ENCODE measurements at regions of chr1 and their contacts with region 1.

Region 1: GRCh38 chr1:77978969-77979876 is at the start of gene FUBP1:
- DNase-seq: peak; percentile 79 to 99 (median 84)
- ATAC-seq: peak; percentile 82
- H3K4me3 ChIP-seq: peak within 1 kb of the TSS; percentile 67
- H3K27ac ChIP-seq: peak within 1 kb of the TSS; percentile 96
- H3K4me1 ChIP-seq: peaks cover 0 to 5% of the 10 kb centered on the region in 2 experiments; a peak in 1 of 5 replicates
- H3K27me3 ChIP-seq: no peaks in the 10 kb centered on the region
- CTCF ChIP-seq: peak; percentile 67 to 83 (median 68)
- EP300 ChIP-seq: 0 out of 2 replicates have a peak, but pooled peaks have one; percentile 17
- POLR2A ChIP-seq: peak; percentile 98
- RAD21 ChIP-seq: peak; percentile 29 to 38; a peak in 3 of 4 replicates
- polyA plus RNA-seq, gene FUBP1: 104 to 170 TPM

Region 2: DNA sequence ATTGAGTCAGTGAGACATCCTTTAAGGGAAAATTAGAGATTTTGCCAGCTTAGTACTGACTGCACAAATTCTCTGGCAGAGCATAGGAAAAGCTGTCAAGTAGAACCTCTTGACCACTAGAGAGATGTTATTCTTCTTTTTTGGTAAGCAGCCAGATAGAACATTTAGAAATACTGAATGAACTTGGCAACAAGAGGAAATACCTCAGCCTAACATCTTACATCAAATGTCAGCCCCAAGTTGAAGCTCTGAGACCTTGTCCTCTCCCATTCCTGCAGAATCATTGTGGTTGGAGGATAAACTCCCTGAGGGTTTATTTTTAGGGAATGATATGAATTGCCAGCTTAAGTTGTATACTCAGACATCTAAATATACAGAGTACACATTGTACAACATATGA is 146.3 kb before region 1 on chr1:
- CTCF ChIA-PET with region 1: no interaction called
- POLR2A ChIA-PET with region 1: no interaction called
- in situ Hi-C with region 1: no loop called
- intact Hi-C with region 1: no loop called
- DNase-seq: peak in 2 of 4 experiments; percentile 9 to 38
- ATAC-seq: peak; percentile 61
- H3K4me3 ChIP-seq: no peak overlapping the region
- H3K27ac ChIP-seq: no peak overlapping the region
- H3K4me1 ChIP-seq: peaks cover 0 to 19% of the 10 kb centered on the region in 2 experiments; a peak in 2 of 5 replicates
- H3K27me3 ChIP-seq: no peaks in the 10 kb centered on the region
- CTCF ChIP-seq: no peak
- EP300 ChIP-seq: no peak
- POLR2A ChIP-seq: no peak
- RAD21 ChIP-seq: no peak

Region 3: DNA sequence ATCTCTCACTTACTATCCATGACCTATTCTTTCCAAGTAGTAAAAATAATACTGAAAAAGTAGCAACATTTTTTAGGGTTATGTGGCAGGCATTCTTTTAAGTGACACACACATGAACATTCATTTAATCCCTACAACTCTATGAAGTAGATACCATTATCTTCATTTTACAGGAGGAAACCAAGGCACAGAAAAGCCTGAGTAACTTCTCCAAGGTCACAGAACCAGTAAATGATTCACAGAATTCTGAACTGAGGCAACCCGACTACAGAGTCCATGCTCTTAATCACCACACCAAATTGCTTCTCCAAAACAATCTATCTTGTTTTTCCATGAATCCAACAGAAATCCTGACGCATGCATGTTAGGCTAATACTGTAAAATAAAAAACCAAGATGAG is 17.8 kb before region 1 on chr1:
- CTCF ChIA-PET with region 1: no interaction called
- POLR2A ChIA-PET with region 1: interaction called, 46 read pairs
- in situ Hi-C with region 1: no loop called
- intact Hi-C with region 1: no loop called
- DNase-seq: no peak
- ATAC-seq: no peak
- H3K4me3 ChIP-seq: no peak overlapping the region
- H3K27ac ChIP-seq: no peak overlapping the region
- H3K4me1 ChIP-seq: no peaks in the 10 kb centered on the region
- H3K27me3 ChIP-seq: no peaks in the 10 kb centered on the region
- CTCF ChIP-seq: no peak
- EP300 ChIP-seq: no peak
- POLR2A ChIP-seq: no peak
- RAD21 ChIP-seq: no peak

Region 4: DNA sequence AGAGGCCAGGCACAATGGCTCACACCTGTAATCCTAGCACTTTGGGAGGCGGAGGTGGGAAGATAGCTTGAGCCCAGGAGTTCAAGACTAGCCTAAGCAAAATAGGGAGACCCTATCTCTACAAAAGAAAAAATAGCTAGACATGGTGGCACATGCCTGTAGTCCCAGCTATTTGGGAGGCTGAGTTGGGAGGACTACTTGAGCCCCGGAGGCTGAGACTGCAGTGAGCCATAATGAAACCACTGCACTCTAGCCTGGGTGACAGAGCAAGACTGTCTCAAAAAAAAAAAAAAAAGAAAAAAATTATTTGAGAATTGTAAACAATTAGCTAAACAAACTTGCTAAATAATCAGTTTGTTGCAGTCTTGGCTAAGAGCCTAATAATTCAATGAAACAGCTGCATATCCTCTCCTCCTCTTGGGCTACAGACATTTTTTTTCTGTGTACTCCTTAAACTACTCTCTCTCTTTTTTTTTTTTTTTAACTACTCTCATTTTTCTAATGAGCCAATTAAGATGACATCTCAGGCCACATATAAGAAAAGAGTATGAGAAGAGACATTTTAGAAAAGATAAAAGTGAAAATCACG is 15.0 kb after region 1 on chr1:
- CTCF ChIA-PET with region 1: no interaction called
- POLR2A ChIA-PET with region 1: interaction called, 199 read pairs
- in situ Hi-C with region 1: no loop called
- intact Hi-C with region 1: no loop called
- DNase-seq: no peak
- ATAC-seq: no peak
- H3K4me3 ChIP-seq: no peak overlapping the region
- H3K27ac ChIP-seq: no peak overlapping the region
- H3K4me1 ChIP-seq: no peaks in the 10 kb centered on the region
- H3K27me3 ChIP-seq: no peaks in the 10 kb centered on the region
- CTCF ChIP-seq: no peak
- EP300 ChIP-seq: no peak
- POLR2A ChIP-seq: no peak
- RAD21 ChIP-seq: no peak

Region 5: GRCh38 chr1:78054559-78054958 is 75.3 kb after region 1 on chr1:
- CTCF ChIA-PET with region 1: no interaction called
- POLR2A ChIA-PET with region 1: interaction called, 10 read pairs
- in situ Hi-C with region 1: no loop called
- intact Hi-C with region 1: loop called (anchors 10 kb)
- DNase-seq: no peak
- ATAC-seq: peak; percentile 11; the same call in 2 of the 3 replicates
- H3K4me3 ChIP-seq: no peak overlapping the region
- H3K27ac ChIP-seq: no peak overlapping the region
- H3K4me1 ChIP-seq: peaks cover 0 to 16% of the 10 kb centered on the region in 2 experiments; a peak in 2 of 5 replicates
- H3K27me3 ChIP-seq: no peaks in the 10 kb centered on the region
- CTCF ChIP-seq: no peak
- EP300 ChIP-seq: no peak
- POLR2A ChIP-seq: no peak
- RAD21 ChIP-seq: no peak

Region 6: DNA sequence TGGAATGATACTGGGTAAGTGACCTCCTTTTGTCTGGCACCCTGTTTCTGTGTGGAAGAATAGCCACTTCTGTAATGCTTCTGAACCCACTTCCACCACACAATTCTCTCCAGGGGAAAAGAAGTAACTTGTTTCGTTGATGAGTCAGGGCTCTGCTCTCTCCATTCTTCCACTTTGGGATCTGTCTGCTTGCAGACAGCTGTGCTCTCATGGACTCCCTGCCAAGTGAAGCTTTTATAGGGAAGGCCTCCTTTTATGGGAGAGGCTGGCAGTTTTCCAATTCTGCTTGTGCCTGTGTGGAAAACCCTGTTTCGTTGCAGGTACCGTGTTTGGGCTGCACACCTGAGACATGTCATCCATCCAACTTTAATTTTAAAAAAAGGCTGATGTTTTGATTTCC is 197.2 kb after region 1 on chr1:
- CTCF ChIA-PET with region 1: no interaction called
- POLR2A ChIA-PET with region 1: no interaction called
- in situ Hi-C with region 1: no loop called
- intact Hi-C with region 1: no loop called
- DNase-seq: no peak
- ATAC-seq: no peak
- H3K4me3 ChIP-seq: no peak overlapping the region
- H3K27ac ChIP-seq: no peak overlapping the region
- H3K4me1 ChIP-seq: no peaks in the 10 kb centered on the region
- H3K27me3 ChIP-seq: no peaks in the 10 kb centered on the region
- CTCF ChIP-seq: no peak
- EP300 ChIP-seq: no peak
- POLR2A ChIP-seq: no peak
- RAD21 ChIP-seq: no peak

Measured in K562 (cell line).